PC-3 (cell line): ENCODE measurements at regions of chr1 and their contacts with region 1.

Region 1: DNA sequence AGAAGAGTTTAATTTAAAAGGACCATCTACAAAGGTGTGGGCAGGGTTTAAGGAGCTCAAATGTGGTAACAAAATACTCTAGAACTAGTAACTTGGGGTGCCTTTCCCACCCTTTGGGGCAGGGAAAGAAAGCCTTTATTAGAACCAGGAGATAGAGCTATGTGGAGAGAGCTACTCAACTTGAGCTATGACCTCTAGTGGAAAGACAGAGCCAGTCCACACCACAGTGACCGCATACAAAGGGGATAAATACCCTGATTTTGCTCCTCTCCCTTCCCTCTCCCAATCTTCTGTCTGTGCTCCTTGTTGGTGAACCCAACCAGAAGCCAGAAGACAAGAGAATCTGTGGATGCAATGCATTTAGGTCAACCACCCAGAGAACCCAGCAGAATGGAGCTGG is 54.4 kb upstream of the JAK1 start:
- DNase-seq: peak; percentile 23
- ATAC-seq: peak; percentile 85
- H3K4me3 ChIP-seq: no peak overlapping the region
- H3K27ac ChIP-seq: no peak overlapping the region
- H3K4me1 ChIP-seq: no peaks in the 10 kb centered on the region
- H3K27me3 ChIP-seq: no peaks in the 10 kb centered on the region
- CTCF ChIP-seq: peak; percentile 61

Region 2: DNA sequence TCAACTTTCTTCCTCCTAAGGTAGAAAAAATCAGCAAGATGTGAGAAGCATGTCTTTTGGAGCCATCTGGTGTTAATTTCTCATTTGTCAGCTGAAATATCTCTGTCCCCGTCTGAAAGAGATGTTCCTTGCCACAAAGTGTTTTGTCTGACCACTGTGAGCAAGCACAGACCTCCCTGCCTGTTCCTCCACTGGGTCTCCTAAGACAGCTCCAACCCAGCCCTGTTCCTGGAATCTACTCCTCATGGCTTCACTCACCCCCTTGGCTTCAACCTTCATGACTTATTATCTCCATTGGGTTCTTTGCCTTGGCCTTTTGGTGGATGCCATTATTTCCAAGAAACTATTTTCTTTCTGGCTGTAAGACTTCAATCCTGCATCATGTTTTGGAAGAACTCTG is 616.6 kb before region 1 on chr1:
- CTCF ChIA-PET with region 1: no interaction called
- POLR2A ChIA-PET with region 1: no interaction called
- intact Hi-C with region 1: no loop called
- DNase-seq: no peak
- ATAC-seq: no peak
- H3K4me3 ChIP-seq: no peak overlapping the region
- H3K27ac ChIP-seq: no peak overlapping the region
- H3K4me1 ChIP-seq: no peaks in the 10 kb centered on the region
- H3K27me3 ChIP-seq: no peaks in the 10 kb centered on the region
- CTCF ChIP-seq: no peak

Region 3: DNA sequence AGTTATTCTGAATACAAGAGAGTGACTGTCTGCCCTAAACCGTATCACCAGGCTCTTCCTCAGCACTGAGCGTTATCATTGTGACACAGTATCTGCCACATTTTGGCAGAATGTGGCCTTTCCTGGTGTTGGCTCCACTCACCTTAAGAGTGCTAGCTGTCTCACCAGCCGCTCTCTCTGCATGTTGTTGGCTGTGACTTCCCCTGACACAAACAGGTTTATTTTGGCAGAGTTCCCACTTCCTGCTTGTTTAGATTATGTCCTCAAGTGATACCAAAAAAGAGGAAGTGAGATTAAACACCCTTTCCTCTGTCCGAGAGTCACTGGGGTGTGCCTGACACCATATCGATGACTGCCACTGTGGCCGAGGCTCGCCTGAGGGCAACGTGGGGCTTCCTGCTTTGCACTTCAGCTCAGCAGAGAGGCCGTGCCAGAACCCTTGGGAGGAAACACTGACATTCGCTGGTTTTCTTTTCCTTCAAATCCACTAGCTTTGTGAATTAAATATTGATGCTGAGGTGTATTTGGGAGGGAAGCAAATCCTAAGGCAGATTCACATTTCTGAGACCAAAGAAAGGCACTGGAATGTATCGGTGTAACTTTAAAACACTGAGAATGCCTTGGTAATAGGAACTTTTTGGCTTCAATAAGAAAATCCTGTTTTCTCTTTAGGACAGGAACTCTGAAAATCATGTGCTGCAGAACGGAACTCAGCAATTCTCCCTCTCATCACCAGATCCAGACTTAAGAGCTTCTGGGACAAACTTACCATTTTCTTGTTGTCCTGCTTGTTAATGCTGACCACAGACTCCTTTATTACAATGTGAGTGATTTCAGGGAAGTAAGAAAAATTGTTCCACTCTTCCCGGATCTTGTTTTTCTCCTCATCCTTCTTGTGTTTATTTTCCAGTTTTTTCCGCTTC is 156.5 kb before region 1 on chr1:
- CTCF ChIA-PET with region 1: no interaction called
- POLR2A ChIA-PET with region 1: no interaction called
- intact Hi-C with region 1: loop called (anchors 1 kb)
- DNase-seq: peak; percentile 84
- ATAC-seq: peak; percentile 90
- H3K4me3 ChIP-seq: no peak overlapping the region
- H3K27ac ChIP-seq: peak overlapping the region; percentile 44
- H3K4me1 ChIP-seq: peaks cover 17% of the 10 kb centered on the region
- H3K27me3 ChIP-seq: no peaks in the 10 kb centered on the region
- CTCF ChIP-seq: no peak

Region 4: DNA sequence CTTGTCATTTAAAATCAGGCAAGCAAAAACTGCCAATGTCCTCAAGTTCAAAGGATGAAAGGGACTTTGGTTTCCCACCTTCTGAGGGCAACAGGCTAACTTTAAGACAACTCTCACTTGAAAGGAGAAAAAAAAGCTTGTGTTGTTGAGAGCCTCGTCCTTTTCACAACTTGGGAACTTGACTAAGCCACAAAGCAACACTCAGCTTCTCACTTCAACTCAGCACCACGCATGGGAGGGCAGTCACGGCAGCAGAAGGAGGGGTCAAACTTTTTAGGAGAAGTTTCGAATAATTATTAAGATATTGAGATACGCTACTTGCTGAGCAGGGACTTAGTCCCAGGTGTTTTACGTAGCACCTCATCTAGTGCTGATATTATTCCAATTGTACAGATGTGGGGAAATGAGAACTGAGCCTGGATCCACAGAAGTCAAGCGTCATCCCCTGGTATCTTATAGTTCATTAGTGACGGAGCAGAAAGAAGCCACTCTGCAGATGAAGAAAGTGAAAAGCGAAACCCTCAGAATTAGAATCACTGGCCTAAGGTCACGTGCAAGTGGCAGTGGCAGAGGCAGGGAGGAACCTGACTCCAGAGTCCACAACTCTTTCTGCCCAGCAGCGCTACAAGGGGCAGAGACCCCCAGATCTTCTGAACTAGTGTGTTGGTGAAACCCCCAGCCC is 138.1 kb before region 1 on chr1:
- CTCF ChIA-PET with region 1: no interaction called
- POLR2A ChIA-PET with region 1: no interaction called
- intact Hi-C with region 1: loop called (anchors 5 kb)
- DNase-seq: no peak
- ATAC-seq: no peak
- H3K4me3 ChIP-seq: no peak overlapping the region
- H3K27ac ChIP-seq: no peak overlapping the region
- H3K4me1 ChIP-seq: peaks cover 16% of the 10 kb centered on the region
- H3K27me3 ChIP-seq: no peaks in the 10 kb centered on the region
- CTCF ChIP-seq: no peak

Region 5: DNA sequence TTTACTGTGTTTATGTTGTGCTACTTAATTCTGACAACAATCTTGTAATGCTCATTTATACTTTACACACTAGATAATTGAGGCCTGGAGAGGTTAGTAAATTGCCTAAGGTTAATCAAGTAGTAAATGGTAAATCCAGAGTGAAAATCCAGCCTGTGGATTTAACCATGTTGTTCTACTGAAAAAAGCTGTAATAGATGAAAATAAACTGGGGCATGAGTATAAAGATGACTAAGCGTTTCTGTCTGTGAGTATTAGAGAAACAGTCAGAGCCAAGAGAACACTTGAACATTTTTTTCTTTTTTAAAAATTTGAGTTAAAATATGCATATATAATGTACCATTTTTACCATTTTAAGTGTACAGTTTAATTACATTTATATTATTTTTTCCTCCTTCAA is 351.8 kb after region 1 on chr1:
- CTCF ChIA-PET with region 1: no interaction called
- POLR2A ChIA-PET with region 1: no interaction called
- intact Hi-C with region 1: no loop called
- DNase-seq: peak; percentile 13
- ATAC-seq: no peak; the same call in 1 of the 2 replicates
- H3K4me3 ChIP-seq: no peak overlapping the region
- H3K27ac ChIP-seq: no peak overlapping the region
- H3K4me1 ChIP-seq: peaks cover 6% of the 10 kb centered on the region
- H3K27me3 ChIP-seq: no peaks in the 10 kb centered on the region
- CTCF ChIP-seq: no peak